ENCODE measurements at regions of chr9 and their contacts with region 1.

Region 1: DNA sequence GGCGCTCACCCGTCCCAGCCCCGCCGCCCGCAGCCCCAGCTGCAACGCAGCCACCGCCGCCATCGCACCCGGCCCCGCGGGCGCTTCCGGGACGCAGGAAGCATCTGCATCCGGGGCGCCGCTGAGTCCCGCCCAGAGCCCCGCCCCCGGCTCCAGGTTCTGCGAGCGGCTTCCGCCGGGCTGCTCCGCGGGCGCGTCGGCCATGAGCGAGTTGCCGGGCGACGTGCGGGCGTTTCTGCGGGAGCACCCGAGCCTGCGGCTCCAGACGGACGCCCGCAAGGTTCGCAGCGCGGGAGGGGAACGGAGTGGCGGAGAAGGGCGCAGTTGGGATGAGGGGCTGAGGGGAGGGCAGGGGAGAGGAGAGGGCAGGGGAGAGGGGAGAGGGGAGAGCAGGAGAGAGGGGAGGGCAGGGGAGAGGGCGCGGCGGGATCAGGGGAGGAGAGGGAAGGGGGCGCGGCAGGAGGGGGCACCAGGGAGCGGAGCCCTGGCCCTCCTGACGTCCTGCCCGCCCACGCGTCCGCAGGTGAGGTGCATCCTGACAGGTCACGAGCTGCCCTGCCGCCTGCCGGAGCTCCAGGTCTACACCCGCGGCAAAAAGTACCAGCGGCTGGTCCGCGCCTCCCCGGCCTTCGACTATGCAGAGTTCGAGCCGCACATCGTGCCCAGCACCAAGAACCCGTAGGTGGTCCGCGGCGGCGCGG is at the starts of genes SURF1 and SURF2:
- DNase-seq: peak; percentile 81 to 93 (median 91)
- ATAC-seq: peak; percentile 93
- H3K4me3 ChIP-seq: peak within 1 kb of the TSS; percentile 78 to 86
- H3K4me3 Mint-ChIP-seq: peak within 1 kb of the TSS; percentile 87
- H3K27ac ChIP-seq: peak within 1 kb of the TSS; percentile 72 to 77
- H3K27ac Mint-ChIP-seq: peak within 1 kb of the TSS; percentile 93
- H3K4me1 ChIP-seq: peaks cover 30% of the 10 kb centered on the region
- H3K4me1 Mint-ChIP-seq: peaks cover 36% of the 10 kb centered on the region
- H3K27me3 ChIP-seq: no peaks in the 10 kb centered on the region
- H3K27me3 Mint-ChIP-seq: no peaks in the 10 kb centered on the region
- CTCF ChIP-seq: no peak
- total RNA-seq, gene SURF1: 34.3 to 36.8 TPM
- total RNA-seq, gene SURF2: 18.6 to 21.9 TPM

Region 2: GRCh38 chr9:133264235-133264764 is 92.2 kb before region 1 on chr9:
- CTCF ChIA-PET with region 1: no interaction called
- POLR2A ChIA-PET with region 1: no interaction called
- intact Hi-C with region 1: no loop called
- DNase-seq: no peak
- ATAC-seq: no peak
- H3K4me3 ChIP-seq: no peak overlapping the region
- H3K4me3 Mint-ChIP-seq: no peak overlapping the region
- H3K27ac ChIP-seq: no peak overlapping the region
- H3K27ac Mint-ChIP-seq: no peak overlapping the region
- H3K4me1 ChIP-seq: no peaks in the 10 kb centered on the region
- H3K4me1 Mint-ChIP-seq: no peaks in the 10 kb centered on the region
- H3K27me3 ChIP-seq: no peaks in the 10 kb centered on the region
- H3K27me3 Mint-ChIP-seq: peaks cover 15% of the 10 kb centered on the region
- CTCF ChIP-seq: no peak

Region 3: GRCh38 chr9:133368249-133368881 is 11.8 kb after region 1 on chr9:
- CTCF ChIA-PET with region 1: interaction called, 25 read pairs
- POLR2A ChIA-PET with region 1: interaction called, 34 read pairs
- intact Hi-C with region 1: loop called (anchors 1 kb)
- DNase-seq: no peak
- ATAC-seq: no peak
- H3K4me3 ChIP-seq: no peak overlapping the region
- H3K4me3 Mint-ChIP-seq: peak overlapping the region; percentile 77
- H3K27ac ChIP-seq: peak overlapping the region in 1 of 2 experiments; percentile 91
- H3K27ac Mint-ChIP-seq: peak overlapping the region; percentile 97
- H3K4me1 ChIP-seq: peaks cover 55% of the 10 kb centered on the region
- H3K4me1 Mint-ChIP-seq: peaks cover 72% of the 10 kb centered on the region
- H3K27me3 ChIP-seq: no peaks in the 10 kb centered on the region
- H3K27me3 Mint-ChIP-seq: no peaks in the 10 kb centered on the region
- CTCF ChIP-seq: no peak

Region 4: GRCh38 chr9:133394687-133395271 is 38.2 kb after region 1 on chr9:
- CTCF ChIA-PET with region 1: no interaction called
- POLR2A ChIA-PET with region 1: no interaction called
- intact Hi-C with region 1: no loop called
- DNase-seq: no peak
- ATAC-seq: no peak
- H3K4me3 ChIP-seq: no peak overlapping the region
- H3K4me3 Mint-ChIP-seq: no peak overlapping the region
- H3K27ac ChIP-seq: no peak overlapping the region
- H3K27ac Mint-ChIP-seq: no peak overlapping the region
- H3K4me1 ChIP-seq: no peaks in the 10 kb centered on the region
- H3K4me1 Mint-ChIP-seq: no peaks in the 10 kb centered on the region
- H3K27me3 ChIP-seq: no peaks in the 10 kb centered on the region
- H3K27me3 Mint-ChIP-seq: peaks cover 3% of the 10 kb centered on the region
- CTCF ChIP-seq: no peak

Region 5: GRCh38 chr9:133406480-133407307 is 50.2 kb after region 1 on chr9:
- CTCF ChIA-PET with region 1: interaction called, 3 read pairs
- POLR2A ChIA-PET with region 1: no interaction called
- intact Hi-C with region 1: loop called (anchors 1 kb)
- DNase-seq: peak; percentile 62 to 87 (median 83)
- ATAC-seq: peak; percentile 91
- H3K4me3 ChIP-seq: no peak overlapping the region
- H3K4me3 Mint-ChIP-seq: no peak overlapping the region
- H3K27ac ChIP-seq: peak overlapping the region in 1 of 2 experiments; percentile 58
- H3K27ac Mint-ChIP-seq: peak overlapping the region; percentile 64
- H3K4me1 ChIP-seq: peaks cover 3% of the 10 kb centered on the region
- H3K4me1 Mint-ChIP-seq: peaks cover 11% of the 10 kb centered on the region
- H3K27me3 ChIP-seq: no peaks in the 10 kb centered on the region
- H3K27me3 Mint-ChIP-seq: no peaks in the 10 kb centered on the region
- CTCF ChIP-seq: peak; percentile 89

Region 6: DNA sequence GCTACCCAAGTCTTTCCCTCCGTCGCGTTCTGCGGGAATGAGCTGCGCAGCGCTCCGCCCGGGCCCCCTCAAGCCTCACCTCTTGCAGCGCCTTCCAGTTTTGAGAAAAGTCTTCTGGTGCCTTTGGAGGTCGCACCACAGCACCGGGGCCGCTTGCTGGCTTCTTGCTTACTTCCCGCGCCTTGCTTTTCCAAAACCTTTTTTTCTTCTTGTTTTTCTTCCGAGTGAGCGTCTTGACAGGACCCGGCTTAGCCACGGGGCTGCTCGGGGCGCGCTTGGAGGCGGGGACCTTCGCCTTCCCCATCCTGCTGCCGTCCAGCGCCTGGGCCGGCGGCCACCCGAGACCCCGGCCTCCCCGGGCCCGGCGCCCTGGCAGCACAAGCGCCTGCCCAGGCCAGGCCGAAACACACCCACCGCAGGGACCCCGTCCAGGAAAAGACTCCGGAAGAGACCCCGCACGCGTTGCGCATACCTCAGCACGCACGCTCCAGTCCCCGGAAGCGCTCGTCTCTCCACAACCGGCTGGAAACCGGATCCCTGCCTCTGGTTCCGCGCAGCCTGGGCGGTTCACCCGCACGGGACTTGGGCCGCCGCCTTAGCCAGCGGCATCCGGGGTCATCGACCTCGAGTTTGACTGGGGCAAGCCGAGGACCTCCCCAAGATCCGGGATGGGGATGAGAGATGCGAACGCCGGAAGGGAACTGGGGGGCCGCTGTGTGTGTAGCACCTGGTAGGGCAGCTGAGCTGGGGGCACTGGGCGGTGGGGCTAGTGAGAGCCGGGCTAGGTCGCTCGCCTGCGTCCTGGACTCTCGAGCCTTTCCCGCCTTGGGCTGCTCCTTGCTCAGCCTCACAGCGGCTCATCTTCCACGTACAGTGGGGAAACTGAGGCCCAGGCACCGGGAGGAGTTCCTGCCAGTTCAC is 61.3 kb after region 1 on chr9 and contains the start of gene REXO4:
- CTCF ChIA-PET with region 1: no interaction called
- POLR2A ChIA-PET with region 1: interaction called, 6 read pairs
- intact Hi-C with region 1: loop called (anchors 1 kb)
- DNase-seq: peak; percentile 73 to 91 (median 81)
- ATAC-seq: peak; percentile 88
- H3K4me3 ChIP-seq: peak within 1 kb of the TSS; percentile 80 to 88
- H3K4me3 Mint-ChIP-seq: peak within 1 kb of the TSS; percentile 87
- H3K27ac ChIP-seq: peak within 1 kb of the TSS; percentile 68 to 89
- H3K27ac Mint-ChIP-seq: peak within 1 kb of the TSS; percentile 90
- H3K4me1 ChIP-seq: peaks cover 23% of the 10 kb centered on the region
- H3K4me1 Mint-ChIP-seq: peaks cover 54% of the 10 kb centered on the region
- H3K27me3 ChIP-seq: no peaks in the 10 kb centered on the region
- H3K27me3 Mint-ChIP-seq: no peaks in the 10 kb centered on the region
- CTCF ChIP-seq: no peak
- total RNA-seq, gene REXO4: 22.5 to 24.0 TPM

Region 7: GRCh38 chr9:133459476-133460404 is 103.2 kb after region 1 on chr9 and contains the start of gene CACFD1:
- CTCF ChIA-PET with region 1: no interaction called
- POLR2A ChIA-PET with region 1: no interaction called
- intact Hi-C with region 1: no loop called
- DNase-seq: peak; percentile 77 to 96 (median 93)
- ATAC-seq: peak; percentile 80
- H3K4me3 ChIP-seq: peak within 1 kb of the TSS; percentile 71 to 76
- H3K4me3 Mint-ChIP-seq: peak within 1 kb of the TSS; percentile 87
- H3K27ac ChIP-seq: peak within 1 kb of the TSS; percentile 74 to 80
- H3K27ac Mint-ChIP-seq: peak within 1 kb of the TSS; percentile 97
- H3K4me1 ChIP-seq: peaks cover 14% of the 10 kb centered on the region
- H3K4me1 Mint-ChIP-seq: peaks cover 12% of the 10 kb centered on the region
- H3K27me3 ChIP-seq: no peaks in the 10 kb centered on the region
- H3K27me3 Mint-ChIP-seq: no peaks in the 10 kb centered on the region
- CTCF ChIP-seq: no peak
- total RNA-seq, gene CACFD1: 7.4 to 9.7 TPM